ENCODE measurements at regions of chr1 and their contacts with region 1.

Region 1: DNA sequence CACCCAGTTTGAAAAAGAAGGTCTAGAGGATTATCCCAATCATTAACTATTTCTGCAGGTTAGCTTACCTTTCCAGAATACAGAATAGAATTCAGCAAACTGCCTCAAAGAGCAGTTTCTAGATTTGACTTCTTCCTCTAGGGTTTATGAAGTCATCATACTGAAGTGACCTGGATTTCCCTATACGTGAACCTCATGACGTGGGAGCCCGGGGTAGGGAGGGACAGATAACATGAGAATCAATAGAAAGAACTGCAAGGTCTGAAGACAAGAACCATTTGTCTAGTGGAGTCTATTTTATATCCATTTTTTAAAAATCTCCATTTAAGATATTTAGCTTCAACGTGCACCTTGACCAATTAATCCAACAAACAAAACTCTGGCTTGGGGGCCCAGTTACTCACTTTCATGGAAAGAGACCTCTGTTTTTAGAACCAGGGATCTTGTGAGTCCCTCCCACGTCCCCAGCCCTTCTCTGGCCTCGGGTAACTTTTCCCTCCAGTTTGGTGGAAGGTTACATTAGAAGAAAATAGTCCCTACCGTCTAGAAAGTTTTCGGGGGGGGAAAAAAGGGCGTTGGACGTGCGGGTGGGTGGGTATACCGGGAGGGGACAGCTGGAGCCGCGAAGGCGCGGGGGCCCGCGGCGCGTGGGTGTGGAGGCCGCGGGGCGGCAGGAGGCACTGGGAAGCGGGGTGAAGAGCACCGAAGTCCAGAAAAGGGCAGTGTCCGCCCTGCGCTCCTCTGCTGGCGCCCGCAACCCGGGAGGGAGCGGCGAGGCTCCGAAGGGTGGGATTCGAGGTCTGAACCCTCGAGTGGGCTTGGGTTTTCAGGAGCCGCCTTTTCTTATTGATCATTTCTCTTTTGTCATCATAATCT is 13.8 kb upstream of the POGZ start:
- DNase-seq: peak; percentile 56 to 73 (median 64)
- H3K4me3 ChIP-seq: peak overlapping the region; percentile 74
- H3K27ac ChIP-seq: peak overlapping the region in 1 of 2 donors; percentile 27
- H3K4me1 ChIP-seq: no peaks in the 10 kb centered on the region
- H3K27me3 ChIP-seq: no peaks in the 10 kb centered on the region
- CTCF ChIP-seq: no peak
- EP300 ChIP-seq: no peak
- POLR2A ChIP-seq: no peak

Region 2: DNA sequence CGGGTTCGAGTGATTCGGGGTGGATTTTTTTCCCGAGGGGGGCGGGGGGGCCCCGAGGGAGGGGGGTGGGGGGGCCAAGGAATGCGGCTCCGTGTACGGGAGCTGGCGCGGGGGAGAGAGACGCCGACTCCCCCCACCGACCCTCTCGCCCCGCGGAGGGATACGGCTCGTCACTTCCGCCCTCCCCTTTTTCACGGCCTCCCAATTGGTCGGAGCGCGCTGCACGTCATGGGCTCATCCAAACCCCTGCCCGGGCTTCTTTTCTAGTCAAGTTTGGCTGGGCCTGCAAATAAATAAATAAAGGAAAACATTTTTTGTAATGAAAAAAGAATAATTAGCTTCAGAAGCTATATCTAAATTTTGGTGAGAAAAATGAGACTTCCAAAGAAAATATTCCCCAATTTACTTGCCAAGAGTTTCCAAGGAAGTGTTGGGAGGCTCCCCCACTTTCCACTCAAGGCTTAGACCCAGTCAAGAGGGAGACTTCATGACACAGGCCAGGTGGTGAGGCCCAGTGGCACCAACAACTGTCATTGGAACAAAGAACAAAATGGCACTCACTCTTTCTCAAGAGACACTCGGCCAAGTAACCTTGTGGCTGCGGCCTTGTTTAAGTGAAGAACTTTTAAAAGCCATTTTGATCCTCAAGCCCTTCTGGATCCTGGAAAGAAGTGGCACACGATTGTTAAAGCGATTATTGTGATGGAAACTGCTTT is 13.6 kb before region 1 on chr1 and contains the start of gene POGZ:
- intact Hi-C with region 1: loop called in 1 of 4 experiments (anchors 2 kb)
- DNase-seq: peak; percentile 98
- H3K4me3 ChIP-seq: peak within 1 kb of the TSS; percentile 73
- H3K27ac ChIP-seq: peak within 1 kb of the TSS; percentile 98 to 99
- H3K4me1 ChIP-seq: peaks cover 13% of the 10 kb centered on the region
- H3K27me3 ChIP-seq: no peaks in the 10 kb centered on the region
- CTCF ChIP-seq: no peak
- EP300 ChIP-seq: no peak
- POLR2A ChIP-seq: peak; percentile 33
- total RNA-seq, gene POGZ: 54.8 to 151 (median 104) TPM

Region 3: DNA sequence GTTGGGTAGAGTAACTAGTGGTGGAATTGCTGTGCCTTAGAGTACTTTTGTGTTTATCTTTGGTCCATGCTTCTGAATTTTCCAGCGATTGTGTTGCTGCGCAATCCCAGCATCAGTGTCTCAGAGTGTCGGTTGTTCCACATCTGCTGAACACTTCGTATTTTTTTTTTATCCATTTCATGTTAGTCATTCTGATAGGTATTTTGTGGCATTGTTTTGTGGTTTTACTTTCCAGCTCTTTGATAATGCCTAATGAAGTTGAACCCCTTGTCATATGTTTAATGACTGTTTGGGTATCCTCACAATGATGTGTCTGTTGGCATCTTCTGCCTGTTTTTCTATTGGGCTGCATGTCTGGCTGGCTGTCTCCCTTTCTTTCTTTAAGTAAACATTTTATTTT is 80.6 kb after region 1 on chr1:
- intact Hi-C with region 1: no loop called
- DNase-seq: no peak
- H3K4me3 ChIP-seq: no peak overlapping the region
- H3K27ac ChIP-seq: no peak overlapping the region
- H3K4me1 ChIP-seq: no peaks in the 10 kb centered on the region
- H3K27me3 ChIP-seq: no peaks in the 10 kb centered on the region
- CTCF ChIP-seq: no peak
- EP300 ChIP-seq: no peak
- POLR2A ChIP-seq: no peak

Region 4: GRCh38 chr1:152107984-152108881 is 635.1 kb after region 1 on chr1:
- intact Hi-C with region 1: no loop called
- DNase-seq: no peak
- H3K4me3 ChIP-seq: no peak overlapping the region
- H3K27ac ChIP-seq: no peak overlapping the region
- H3K4me1 ChIP-seq: peaks cover 2% of the 10 kb centered on the region
- H3K27me3 ChIP-seq: no peaks in the 10 kb centered on the region
- CTCF ChIP-seq: no peak
- EP300 ChIP-seq: no peak
- POLR2A ChIP-seq: no peak